GM13977 (cell line): ENCODE measurements at regions of chr3 and their contacts with region 1.

Region 1: DNA sequence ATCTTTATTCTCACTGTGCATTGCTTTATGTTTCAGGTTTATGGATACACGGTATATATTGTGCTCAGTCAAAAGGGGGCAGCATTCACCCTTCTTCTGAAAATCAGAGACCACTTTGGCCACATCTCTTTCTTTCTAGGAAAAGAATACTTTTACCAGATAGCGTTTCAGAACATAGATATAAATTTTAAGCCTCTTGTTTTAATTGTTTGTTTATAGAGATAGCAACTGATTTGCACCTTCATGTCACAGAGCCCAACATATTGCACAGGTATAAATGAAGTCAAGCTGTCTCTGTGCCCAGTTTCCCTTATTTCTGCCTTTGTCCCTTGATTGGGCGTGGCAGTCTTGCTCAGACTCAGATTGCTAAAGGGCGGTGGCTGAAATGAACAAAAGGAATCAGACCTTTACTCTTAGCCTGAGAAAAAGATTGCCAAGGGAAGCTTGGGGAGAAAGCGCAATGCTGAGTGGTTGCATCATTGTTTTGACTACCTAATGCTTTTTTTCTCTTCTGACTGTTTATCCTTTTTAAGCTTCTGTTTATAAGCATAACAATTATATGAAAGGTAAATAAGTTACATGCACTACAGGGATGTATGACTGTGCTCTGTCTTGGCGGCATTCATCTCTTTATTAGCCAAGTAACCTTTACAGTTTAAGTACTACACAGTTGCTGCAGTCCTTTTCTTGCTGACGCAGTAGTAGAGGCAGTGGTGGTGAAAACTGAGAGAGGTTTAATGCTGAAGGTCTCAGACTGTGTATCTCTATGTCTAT is 70.8 kb upstream of the ZBTB20 start:
- DNase-seq: peak; percentile 14
- CTCF ChIP-seq: peak; percentile 63

Region 2: DNA sequence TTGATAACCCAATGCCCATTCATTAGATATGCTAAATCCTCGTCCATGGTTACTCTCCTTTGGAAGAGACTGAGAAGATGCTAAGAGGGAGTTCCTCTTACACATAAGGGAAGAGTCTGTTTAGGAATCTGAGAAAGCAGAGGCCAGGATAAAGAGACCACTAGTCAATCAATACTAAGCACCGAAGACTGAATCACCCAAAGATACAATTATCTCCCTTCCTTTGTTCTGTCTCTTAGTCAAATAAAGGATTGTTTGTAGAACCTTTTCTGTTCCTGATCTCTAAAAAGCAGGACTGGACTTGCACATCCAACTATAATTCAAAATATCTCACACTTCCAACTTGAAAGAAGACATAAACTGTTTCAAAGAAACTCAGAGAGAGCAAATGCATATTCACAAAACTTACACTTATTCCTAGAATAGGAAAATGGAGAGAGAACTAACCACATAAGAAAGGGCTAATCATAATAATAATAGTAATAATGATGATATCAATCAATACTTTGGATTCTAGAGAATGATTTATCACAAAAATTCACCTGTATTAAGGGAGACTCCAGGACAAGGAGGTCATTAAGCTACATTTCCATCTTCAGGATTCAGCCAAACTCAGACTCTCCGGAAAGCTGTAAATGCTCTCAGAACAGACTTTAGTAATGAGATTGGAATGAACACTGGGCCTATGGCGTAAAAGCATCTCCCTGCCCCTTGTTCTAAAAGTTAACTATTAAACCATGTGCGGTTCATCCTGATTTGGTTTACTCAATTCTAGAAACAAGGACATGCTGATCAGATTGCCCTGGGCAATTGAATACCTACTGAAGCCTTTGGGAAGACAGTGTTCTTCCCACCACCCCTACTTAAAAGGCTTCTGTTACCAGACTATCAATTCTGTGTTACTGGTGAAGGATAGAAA is 472.3 kb before region 1 on chr3:
- in situ Hi-C with region 1: no loop called
- DNase-seq: no peak
- CTCF ChIP-seq: no peak

Region 3: GRCh38 chr3:115325539-115325938 is 107.7 kb after region 1 on chr3:
- in situ Hi-C with region 1: no loop called
- DNase-seq: no peak
- CTCF ChIP-seq: no peak

Region 4: GRCh38 chr3:115819785-115820384 is 602.0 kb after region 1 on chr3:
- in situ Hi-C with region 1: loop called (anchors 25 kb)
- DNase-seq: peak; percentile 66
- CTCF ChIP-seq: peak; percentile 98

Region 5: DNA sequence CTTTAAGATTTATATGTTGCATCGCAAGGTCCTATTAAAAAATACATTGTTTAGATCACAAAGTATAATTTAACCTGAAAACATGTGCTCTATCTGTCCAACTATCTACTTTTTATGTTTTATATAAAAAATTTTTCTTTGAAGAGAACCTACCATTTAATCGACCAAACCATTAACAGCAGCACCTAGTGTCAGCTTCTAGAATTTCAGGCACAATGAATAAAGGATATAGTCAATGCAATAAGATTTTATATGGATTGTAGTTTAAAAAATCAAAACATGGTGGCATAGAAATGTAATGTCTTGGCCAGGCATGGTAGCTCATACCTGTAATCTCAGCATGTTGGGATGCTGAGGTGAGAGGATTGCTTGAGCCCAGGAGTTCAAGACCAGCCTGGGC is 719.2 kb after region 1 on chr3:
- in situ Hi-C with region 1: no loop called
- DNase-seq: no peak
- CTCF ChIP-seq: peak; percentile 23